ENCODE measurements at regions of chr11 and their contacts with region 1.

Region 1: GRCh38 chr11:10307442-10308207 is 2.8 kb downstream of the ADM start:
- DNase-seq: peak; percentile 96
- H3K4me3 ChIP-seq: peak overlapping the region; percentile 91 to 95 (median 93)
- H3K27ac ChIP-seq: peak overlapping the region; percentile 80
- H3K4me1 ChIP-seq: peaks cover 42% of the 10 kb centered on the region
- H3K27me3 ChIP-seq: no peaks in the 10 kb centered on the region
- CTCF ChIP-seq: peak; percentile 87 to 99
- POLR2A ChIP-seq: peak; percentile 90

Region 2: GRCh38 chr11:9757809-9758636 is 549.6 kb before region 1 on chr11:
- CTCF ChIA-PET with region 1: interaction called, 104 read pairs
- POLR2A ChIA-PET with region 1: interaction called, 43 read pairs
- dilution Hi-C with region 1: no loop called
- intact Hi-C with region 1: loop called (anchors 1 kb)
- DNase-seq: peak; percentile 77
- H3K4me3 ChIP-seq: peak overlapping the region in 2 of 3 experiments; percentile 33 to 37
- H3K27ac ChIP-seq: peak overlapping the region; percentile 67
- H3K4me1 ChIP-seq: peaks cover 34% of the 10 kb centered on the region
- H3K27me3 ChIP-seq: no peaks in the 10 kb centered on the region
- CTCF ChIP-seq: peak; percentile 67 to 92
- POLR2A ChIP-seq: peak; percentile 85

Region 3: DNA sequence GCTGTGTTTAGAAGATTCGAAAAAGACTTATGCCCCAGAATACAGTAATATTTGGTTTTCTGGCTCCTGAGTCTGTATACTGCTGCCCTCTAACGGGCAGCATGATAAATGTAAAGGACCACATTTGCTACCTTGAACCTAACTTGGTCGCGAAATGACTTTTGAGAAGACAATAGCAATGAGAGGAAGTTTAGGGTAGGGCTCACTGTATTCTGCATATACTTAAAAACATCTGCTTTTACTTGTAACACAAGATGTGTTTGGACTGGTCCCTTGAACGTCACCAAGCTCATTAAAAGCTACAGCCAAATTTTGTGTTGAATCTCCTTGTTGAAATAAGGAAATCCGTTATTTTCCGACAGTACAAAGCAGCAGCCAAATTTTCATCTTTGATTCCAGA is 334.6 kb before region 1 on chr11:
- CTCF ChIA-PET with region 1: interaction called, 10 read pairs
- POLR2A ChIA-PET with region 1: interaction called, 12 read pairs
- dilution Hi-C with region 1: no loop called
- intact Hi-C with region 1: loop called (anchors 1 kb)
- DNase-seq: peak; percentile 74
- H3K4me3 ChIP-seq: no peak overlapping the region
- H3K27ac ChIP-seq: no peak overlapping the region
- H3K4me1 ChIP-seq: peaks cover 14% of the 10 kb centered on the region
- H3K27me3 ChIP-seq: no peaks in the 10 kb centered on the region
- CTCF ChIP-seq: peak; percentile 58 to 61
- POLR2A ChIP-seq: no peak

Region 4: DNA sequence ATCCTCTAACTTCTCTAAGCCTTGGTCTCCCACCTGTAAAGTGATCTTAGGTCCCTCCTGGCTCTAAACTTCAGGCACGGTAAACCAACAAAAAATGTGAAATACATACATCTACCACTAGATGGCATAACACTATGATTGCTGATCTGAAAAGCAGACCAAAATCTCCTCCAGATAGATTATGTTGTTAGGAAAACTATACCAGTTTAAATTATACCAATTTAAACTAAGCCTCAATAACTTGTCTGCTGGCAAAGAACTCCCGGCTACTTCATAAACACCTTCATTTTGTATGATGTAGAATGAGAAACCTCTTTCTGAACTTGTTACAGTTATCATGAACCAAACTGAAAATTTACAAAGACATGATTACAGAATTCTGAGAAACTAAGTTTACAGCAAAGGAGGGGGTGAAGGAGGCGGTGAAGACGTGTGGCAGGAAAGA is 99.5 kb before region 1 on chr11:
- CTCF ChIA-PET with region 1: interaction called, 46 read pairs
- POLR2A ChIA-PET with region 1: interaction called, 5 read pairs
- dilution Hi-C with region 1: no loop called
- intact Hi-C with region 1: loop called (anchors 1 kb)
- DNase-seq: peak; percentile 73
- H3K4me3 ChIP-seq: no peak overlapping the region
- H3K27ac ChIP-seq: no peak overlapping the region
- H3K4me1 ChIP-seq: no peaks in the 10 kb centered on the region
- H3K27me3 ChIP-seq: no peaks in the 10 kb centered on the region
- CTCF ChIP-seq: peak; percentile 39 to 41
- POLR2A ChIP-seq: no peak

Region 5: DNA sequence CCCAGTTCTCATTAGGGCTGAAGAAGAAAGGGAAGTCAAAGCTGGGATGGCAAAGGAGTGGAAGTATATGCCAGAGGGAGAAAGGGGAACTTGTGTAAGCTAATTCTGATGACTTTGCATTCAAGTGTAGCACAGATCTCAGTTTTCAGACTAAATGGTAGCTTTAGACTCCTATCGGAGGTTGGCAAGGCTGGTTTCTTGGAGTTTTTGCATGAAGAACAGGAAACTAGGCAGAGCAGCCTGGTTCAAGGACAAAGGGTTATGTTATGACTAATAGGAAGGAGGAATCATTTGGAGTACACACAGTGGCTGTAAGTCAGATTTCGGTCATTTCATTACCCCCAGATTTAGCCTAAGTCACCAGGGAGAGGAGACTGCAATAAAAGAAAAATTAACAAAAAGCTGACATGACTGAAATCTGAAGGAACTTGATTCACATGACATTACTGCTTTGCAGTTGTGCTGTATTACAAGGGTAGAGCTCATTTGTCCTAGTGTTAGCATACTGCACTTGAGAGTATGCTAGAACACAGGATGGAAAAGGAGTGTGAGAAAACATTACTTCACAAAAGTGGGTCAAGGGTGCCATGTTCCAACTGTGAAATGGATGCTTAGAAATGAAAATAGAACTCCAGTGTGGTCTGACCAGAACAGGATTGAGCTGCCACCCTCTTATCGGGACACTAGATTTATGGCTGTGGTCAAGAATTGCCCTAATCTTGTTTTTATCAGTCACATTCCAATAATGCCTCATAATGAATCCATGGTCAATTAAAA is 20.9 kb after region 1 on chr11:
- CTCF ChIA-PET with region 1: interaction called, 73 read pairs
- POLR2A ChIA-PET with region 1: interaction called, 13 read pairs
- dilution Hi-C with region 1: no loop called
- intact Hi-C with region 1: loop called (anchors 1 kb)
- DNase-seq: peak; percentile 94
- H3K4me3 ChIP-seq: peak overlapping the region in 1 of 3 experiments; percentile 14
- H3K27ac ChIP-seq: peak overlapping the region; percentile 84
- H3K4me1 ChIP-seq: peaks cover 67% of the 10 kb centered on the region
- H3K27me3 ChIP-seq: no peaks in the 10 kb centered on the region
- CTCF ChIP-seq: no peak
- POLR2A ChIP-seq: peak; percentile 43

Region 6: GRCh38 chr11:10405855-10406592 is 98.4 kb after region 1 on chr11:
- CTCF ChIA-PET with region 1: interaction called, 8 read pairs
- POLR2A ChIA-PET with region 1: interaction called, 4 read pairs
- dilution Hi-C with region 1: no loop called
- intact Hi-C with region 1: loop called (anchors 1 kb)
- DNase-seq: peak; percentile 89
- H3K4me3 ChIP-seq: no peak overlapping the region
- H3K27ac ChIP-seq: no peak overlapping the region
- H3K4me1 ChIP-seq: peaks cover 26% of the 10 kb centered on the region
- H3K27me3 ChIP-seq: no peaks in the 10 kb centered on the region
- CTCF ChIP-seq: peak; percentile 56 to 73
- POLR2A ChIP-seq: no peak